Ascending aorta (tissue), 2 donors: ENCODE measurements at regions of chr1 and their contacts with region 1.

Region 1: GRCh38 chr1:114581335-114582287 is at the start of gene BCAS2:
- DNase-seq: peak; percentile 93 to 99
- H3K4me3 ChIP-seq: peak within 1 kb of the TSS; percentile 70 to 72
- H3K27ac ChIP-seq: peak within 1 kb of the TSS; percentile 75 to 87
- H3K4me1 ChIP-seq: peaks cover 0 to 24% of the 10 kb centered on the region in 2 donors
- H3K27me3 ChIP-seq: no peaks in the 10 kb centered on the region
- CTCF ChIP-seq: no peak
- total RNA-seq, gene BCAS2: 26.1 TPM

Region 2: GRCh38 chr1:113904674-113905434 is 676.8 kb before region 1 on chr1 and contains the starts of genes AP4B1 and DCLRE1B:
- intact Hi-C with region 1: loop called (anchors 10 kb)
- DNase-seq: peak; percentile 97 to 99
- H3K4me3 ChIP-seq: peak within 1 kb of the TSS; percentile 85 to 86
- H3K27ac ChIP-seq: peak within 1 kb of the TSS; percentile 86 to 92
- H3K4me1 ChIP-seq: peaks cover 0 to 17% of the 10 kb centered on the region in 2 donors
- H3K27me3 ChIP-seq: no peaks in the 10 kb centered on the region
- CTCF ChIP-seq: peak; percentile 53 to 82 (median 69)
- total RNA-seq, gene AP4B1: 3.2 TPM
- total RNA-seq, gene DCLRE1B: 1.9 TPM

Region 3: GRCh38 chr1:114511032-114511785 is 70.4 kb before region 1 on chr1 and contains the start of gene TRIM33:
- intact Hi-C with region 1: loop called (anchors 2 kb)
- DNase-seq: peak; percentile 39 to 94
- H3K4me3 ChIP-seq: peak within 1 kb of the TSS; percentile 78 to 92
- H3K27ac ChIP-seq: peak within 1 kb of the TSS; percentile 91 to 98
- H3K4me1 ChIP-seq: peaks cover 0 to 24% of the 10 kb centered on the region in 2 donors
- H3K27me3 ChIP-seq: no peaks in the 10 kb centered on the region
- CTCF ChIP-seq: peak in 1 of 3 experiments; percentile 15
- total RNA-seq, gene TRIM33: 42.5 TPM

Region 4: GRCh38 chr1:114716304-114717170 is 134.9 kb after region 1 on chr1 and contains the start of gene NRAS:
- intact Hi-C with region 1: loop called (anchors 1 kb)
- DNase-seq: peak; percentile 71 to 97
- H3K4me3 ChIP-seq: peak within 1 kb of the TSS; percentile 86 to 99
- H3K27ac ChIP-seq: peak within 1 kb of the TSS; percentile 87 to 95
- H3K4me1 ChIP-seq: peaks cover 3 to 12% of the 10 kb centered on the region in 2 donors
- H3K27me3 ChIP-seq: no peaks in the 10 kb centered on the region
- CTCF ChIP-seq: no peak
- total RNA-seq, gene NRAS: 10.7 TPM

Region 5: GRCh38 chr1:114780344-114781226 is 199.0 kb after region 1 on chr1 and contains the start of gene SIKE1:
- intact Hi-C with region 1: loop called (anchors 2 kb)
- DNase-seq: peak; percentile 71 to 96
- H3K4me3 ChIP-seq: peak within 1 kb of the TSS; percentile 76 to 92
- H3K27ac ChIP-seq: peak within 1 kb of the TSS; percentile 90
- H3K4me1 ChIP-seq: peaks cover 0 to 8% of the 10 kb centered on the region in 2 donors
- H3K27me3 ChIP-seq: no peaks in the 10 kb centered on the region
- CTCF ChIP-seq: no peak
- total RNA-seq, gene SIKE1: 17.1 TPM

Region 6: GRCh38 chr1:116570358-116571200 is 1989.0 kb after region 1 on chr1 and contains the start of gene CD58:
- intact Hi-C with region 1: loop called (anchors 5 kb)
- DNase-seq: peak; percentile 55 to 95
- H3K4me3 ChIP-seq: peak within 1 kb of the TSS; percentile 91 to 92
- H3K27ac ChIP-seq: peak within 1 kb of the TSS; percentile 99 to 100
- H3K4me1 ChIP-seq: peaks cover 0 to 11% of the 10 kb centered on the region in 2 donors
- H3K27me3 ChIP-seq: no peaks in the 10 kb centered on the region
- CTCF ChIP-seq: peak; percentile 73 to 81 (median 78)
- total RNA-seq, gene CD58: 50.7 TPM